ENCODE measurements at regions of chr5 and their contacts with region 1.

Region 1: GRCh38 chr5:177390363-177391300 is 6.4 kb downstream of the SLC34A1 start:
- DNase-seq: peak; percentile 89
- H3K4me3 Mint-ChIP-seq: peak overlapping the region; percentile 52
- H3K27ac Mint-ChIP-seq: peak overlapping the region; percentile 94
- H3K4me1 Mint-ChIP-seq: peaks cover 41% of the 10 kb centered on the region
- H3K27me3 Mint-ChIP-seq: no peaks in the 10 kb centered on the region

Region 2: DNA sequence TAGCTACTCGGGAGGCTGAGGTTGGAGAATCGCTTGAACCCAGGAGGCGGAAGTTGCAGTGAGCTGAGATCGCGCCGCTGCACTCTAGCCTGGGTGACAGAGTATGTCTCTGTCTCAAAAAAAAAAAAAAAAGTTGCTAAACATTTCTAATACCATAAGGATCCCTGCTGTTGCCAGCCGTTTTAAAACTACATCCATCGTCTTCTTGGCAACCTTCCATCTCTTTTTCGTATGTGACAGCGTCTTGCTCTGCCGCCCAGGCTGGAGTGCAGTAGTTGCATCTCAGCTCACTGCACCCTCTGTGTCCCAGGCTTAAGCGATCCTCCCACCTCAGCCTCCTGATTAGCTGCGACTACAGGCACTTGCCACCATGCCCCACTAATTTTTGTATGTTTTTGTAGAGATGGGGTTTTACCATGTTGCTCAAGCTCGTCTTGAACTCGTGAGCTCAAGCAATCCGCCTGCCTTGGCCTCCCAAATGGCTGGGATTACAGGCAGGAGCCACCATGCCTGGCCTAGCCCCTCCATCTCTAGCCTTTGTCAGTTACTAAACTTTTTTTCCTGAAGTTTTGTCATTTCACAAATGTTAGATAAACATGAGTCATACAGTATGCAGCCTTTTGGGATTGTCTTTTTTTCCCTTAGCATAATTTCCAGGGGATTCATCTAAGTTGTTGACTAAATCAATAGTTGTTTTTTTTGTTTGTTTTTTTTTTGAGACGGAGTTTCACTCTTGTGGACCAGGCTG is 243.6 kb before region 1 on chr5:
- CTCF ChIA-PET with region 1: no interaction called
- POLR2A ChIA-PET with region 1: no interaction called
- DNase-seq: no peak
- H3K4me3 Mint-ChIP-seq: no peak overlapping the region
- H3K27ac Mint-ChIP-seq: no peak overlapping the region
- H3K4me1 Mint-ChIP-seq: peaks cover 8% of the 10 kb centered on the region
- H3K27me3 Mint-ChIP-seq: no peaks in the 10 kb centered on the region

Region 3: DNA sequence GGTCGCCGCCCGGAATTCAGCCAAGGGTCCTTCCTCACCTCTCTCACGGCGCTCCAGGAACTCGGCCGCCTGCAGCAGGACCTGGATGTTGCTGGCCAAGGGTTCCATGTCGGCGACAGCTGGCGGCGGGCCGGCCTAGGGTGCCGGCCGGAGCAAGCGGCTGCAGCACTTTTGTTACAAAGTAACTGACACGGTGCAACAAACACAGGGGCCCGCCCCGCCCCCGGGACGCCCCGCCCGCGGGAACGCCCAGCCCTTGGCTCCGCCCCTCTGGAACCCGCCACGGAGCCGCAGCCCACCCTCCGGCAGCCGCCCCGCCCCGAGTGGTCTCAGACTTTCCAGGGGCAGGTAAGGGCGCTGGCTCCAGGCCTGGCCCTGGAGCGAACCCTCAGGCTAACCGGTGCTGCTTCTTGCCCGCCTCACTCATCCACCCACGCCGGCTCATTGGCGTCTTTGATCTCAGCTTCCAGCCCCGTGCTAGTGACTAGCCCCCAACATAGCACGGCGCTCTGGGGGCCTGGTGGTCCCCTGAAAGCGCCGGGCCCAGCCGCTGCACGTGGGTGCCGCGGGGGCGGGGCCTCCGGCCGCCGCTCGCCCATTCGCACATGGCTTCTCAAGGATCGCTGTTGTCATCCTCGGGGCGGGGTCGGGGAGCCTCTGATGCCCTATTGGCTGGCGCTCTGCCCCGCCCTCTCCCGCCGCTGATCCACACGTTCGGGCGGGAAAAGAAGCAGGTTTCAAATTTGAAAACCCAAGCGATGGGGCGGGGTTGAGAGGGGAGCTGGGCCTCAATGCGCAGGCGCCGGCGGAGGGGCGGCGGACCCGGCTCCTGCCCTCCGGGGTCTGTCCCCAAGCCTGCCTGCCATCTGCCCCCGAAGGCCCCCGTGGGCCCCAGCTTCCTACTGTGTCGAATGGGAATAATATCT is 78.6 kb before region 1 on chr5 and contains the start of gene MXD3:
- CTCF ChIA-PET with region 1: interaction called, 49 read pairs
- POLR2A ChIA-PET with region 1: interaction called, 17 read pairs
- DNase-seq: peak; percentile 99
- H3K4me3 Mint-ChIP-seq: peak within 1 kb of the TSS; percentile 94
- H3K27ac Mint-ChIP-seq: peak within 1 kb of the TSS; percentile 89
- H3K4me1 Mint-ChIP-seq: peaks cover 66% of the 10 kb centered on the region
- H3K27me3 Mint-ChIP-seq: no peaks in the 10 kb centered on the region
- total RNA-seq, gene MXD3: 74.1 to 75.0 TPM

Region 4: DNA sequence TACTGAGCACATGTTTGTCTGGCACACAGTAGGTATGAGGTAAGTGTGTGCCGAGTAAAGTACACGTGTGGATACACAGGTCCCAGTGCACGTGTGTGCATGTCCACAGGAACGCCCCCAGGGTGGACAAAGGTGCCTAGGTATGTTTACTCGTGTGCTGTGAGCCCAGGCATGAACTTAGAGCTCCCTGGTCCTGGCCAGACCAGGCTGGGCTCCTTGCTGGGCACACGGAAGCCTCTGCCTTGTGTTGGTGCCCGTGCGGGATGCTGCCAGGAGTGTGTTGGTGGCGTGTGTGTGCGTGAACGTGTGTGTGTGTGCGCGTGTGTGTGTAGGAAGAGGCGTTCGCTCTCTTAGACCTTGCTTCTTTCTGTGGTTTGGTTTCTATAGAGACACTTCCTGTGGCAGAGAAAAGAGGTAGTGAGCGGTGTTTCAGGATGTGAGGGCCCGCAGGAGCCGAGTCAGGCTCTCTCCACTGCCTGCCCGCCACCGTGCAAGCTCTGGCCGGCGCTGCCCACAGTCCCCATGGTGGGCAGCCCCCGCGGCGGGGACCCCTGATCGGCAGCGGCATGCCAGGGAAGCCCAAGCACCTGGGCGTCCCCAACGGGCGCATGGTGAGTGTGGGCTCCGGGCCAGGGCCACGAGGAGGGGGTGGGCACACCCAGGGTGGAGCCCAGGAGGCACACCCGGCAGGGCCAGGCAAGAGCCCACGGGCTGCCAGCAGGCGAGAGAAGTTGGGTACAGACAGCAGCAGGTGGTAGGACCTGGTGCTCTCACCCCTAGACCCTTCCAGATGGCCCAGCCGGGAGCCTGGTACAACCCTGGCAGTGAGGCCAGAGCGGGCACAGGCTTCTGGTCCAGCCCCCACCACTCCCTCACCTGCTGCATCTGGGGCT is 32.9 kb before region 1 on chr5 and contains the start of gene RGS14:
- CTCF ChIA-PET with region 1: interaction called, 28 read pairs
- POLR2A ChIA-PET with region 1: interaction called, 26 read pairs
- DNase-seq: peak; percentile 74
- H3K4me3 Mint-ChIP-seq: peak within 1 kb of the TSS; percentile 95
- H3K27ac Mint-ChIP-seq: peak within 1 kb of the TSS; percentile 70
- H3K4me1 Mint-ChIP-seq: peaks cover 81% of the 10 kb centered on the region
- H3K27me3 Mint-ChIP-seq: no peaks in the 10 kb centered on the region
- total RNA-seq, gene RGS14: 103 to 107 TPM

Region 5: GRCh38 chr5:177403792-177404640 is 13.4 kb after region 1 on chr5:
- CTCF ChIA-PET with region 1: interaction called, 215 read pairs
- POLR2A ChIA-PET with region 1: interaction called, 51 read pairs
- DNase-seq: peak; percentile 86
- H3K4me3 Mint-ChIP-seq: peak overlapping the region; percentile 75
- H3K27ac Mint-ChIP-seq: no peak overlapping the region
- H3K4me1 Mint-ChIP-seq: peaks cover 39% of the 10 kb centered on the region
- H3K27me3 Mint-ChIP-seq: peaks cover 36% of the 10 kb centered on the region

Region 6: DNA sequence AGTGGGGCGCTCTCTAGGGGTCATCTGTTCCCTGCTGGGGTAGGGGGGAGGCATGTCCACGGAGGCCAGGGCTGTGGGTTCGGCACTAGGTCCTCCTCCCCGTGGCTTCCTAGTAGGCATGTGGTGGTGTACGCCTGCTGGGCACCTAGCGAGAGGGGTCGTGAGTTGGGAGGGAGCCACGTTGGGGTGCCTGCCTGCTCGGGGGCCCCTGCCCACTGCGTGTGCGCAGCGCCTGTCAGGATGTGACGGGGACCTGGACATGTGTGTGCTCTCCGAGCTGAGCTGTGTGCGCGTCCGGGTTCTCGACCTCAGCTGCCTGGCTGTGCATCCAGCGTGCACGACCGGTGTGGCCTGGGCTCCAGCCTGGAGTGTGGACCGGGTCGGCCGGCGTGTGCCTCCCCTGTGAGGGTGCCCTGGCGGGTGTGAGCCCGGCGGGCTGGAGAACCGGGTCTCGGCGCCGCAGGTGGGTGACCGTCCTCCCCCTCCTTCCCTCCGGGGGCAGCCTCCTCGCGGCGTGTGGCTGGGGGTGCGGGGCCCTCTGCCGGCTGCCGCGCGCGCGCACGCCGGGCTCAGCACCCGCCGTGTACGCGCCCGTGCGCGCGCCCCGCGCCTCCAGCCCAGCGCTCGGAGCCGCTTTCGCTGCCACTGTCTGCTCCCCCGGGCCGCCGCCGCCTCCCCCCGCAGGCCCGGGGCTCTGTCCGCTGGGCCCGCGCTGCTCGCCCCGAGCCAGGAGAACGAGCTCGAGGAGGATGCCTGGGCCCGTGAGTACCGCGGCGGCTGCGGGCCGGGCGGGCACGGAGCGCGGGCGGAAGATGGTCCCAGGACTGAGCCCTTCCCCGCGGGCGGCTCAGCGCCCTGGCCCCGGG is 55.8 kb after region 1 on chr5 and contains the start of gene PRR7:
- CTCF ChIA-PET with region 1: interaction called, 188 read pairs
- POLR2A ChIA-PET with region 1: interaction called, 82 read pairs
- DNase-seq: peak; percentile 74
- H3K4me3 Mint-ChIP-seq: peak within 1 kb of the TSS; percentile 70
- H3K27ac Mint-ChIP-seq: peak within 1 kb of the TSS; percentile 80
- H3K4me1 Mint-ChIP-seq: peaks cover 51% of the 10 kb centered on the region
- H3K27me3 Mint-ChIP-seq: peaks cover 10% of the 10 kb centered on the region
- total RNA-seq, gene PRR7: 4.9 to 5.8 TPM